Dendritic cell treated with granulocyte-macrophage colony-stimulating factor and Interleukin-4, amounts not matched to agents 40 ng/mL and 50 ng/mL, for 4 days (primary cell): ENCODE measurements at regions of chr15 and their contacts with region 1.

Region 1: DNA sequence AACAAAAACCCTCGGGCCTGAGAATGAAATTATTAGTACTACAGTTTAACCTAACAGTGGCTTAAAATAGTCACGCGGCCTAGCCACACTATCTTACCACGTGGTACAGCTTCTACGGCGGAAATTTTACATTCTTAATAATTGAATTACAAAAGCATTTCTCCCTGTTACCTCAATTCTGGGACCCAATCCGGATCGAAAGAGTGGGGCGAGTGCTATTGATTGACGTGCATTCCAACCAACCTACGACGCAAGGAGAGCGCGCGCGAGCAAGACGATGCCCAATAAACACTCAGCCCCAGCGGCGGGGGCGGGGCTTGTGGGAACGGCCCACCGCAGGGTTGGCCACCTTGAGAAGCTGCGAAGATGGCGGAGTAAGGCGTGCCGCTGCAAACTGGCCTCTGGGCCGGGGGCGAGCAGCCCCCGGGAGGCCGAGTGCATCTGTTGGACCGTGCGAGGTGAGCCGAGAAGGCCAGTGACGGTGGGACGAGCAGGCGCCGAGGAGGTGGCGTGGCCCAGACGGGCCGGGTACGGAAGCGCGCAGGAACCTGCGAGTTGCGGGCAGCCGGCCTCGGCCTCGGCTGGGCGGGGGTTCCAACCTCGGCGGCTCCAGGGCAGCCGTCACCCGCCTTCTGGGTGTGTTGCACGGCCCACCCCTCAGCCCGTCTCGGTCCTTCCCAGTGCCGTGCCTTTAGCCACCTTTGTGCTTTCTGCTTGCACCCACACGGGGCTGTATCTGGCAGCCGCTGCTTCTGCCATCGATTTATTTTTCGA is 48.6 kb downstream of the OIP5 start:
- H3K4me3 Mint-ChIP-seq: peak overlapping the region; percentile 92
- H3K27ac Mint-ChIP-seq: peak overlapping the region; percentile 97
- H3K4me1 Mint-ChIP-seq: peaks cover 28% of the 10 kb centered on the region
- H3K27me3 Mint-ChIP-seq: no peaks in the 10 kb centered on the region

Region 2: DNA sequence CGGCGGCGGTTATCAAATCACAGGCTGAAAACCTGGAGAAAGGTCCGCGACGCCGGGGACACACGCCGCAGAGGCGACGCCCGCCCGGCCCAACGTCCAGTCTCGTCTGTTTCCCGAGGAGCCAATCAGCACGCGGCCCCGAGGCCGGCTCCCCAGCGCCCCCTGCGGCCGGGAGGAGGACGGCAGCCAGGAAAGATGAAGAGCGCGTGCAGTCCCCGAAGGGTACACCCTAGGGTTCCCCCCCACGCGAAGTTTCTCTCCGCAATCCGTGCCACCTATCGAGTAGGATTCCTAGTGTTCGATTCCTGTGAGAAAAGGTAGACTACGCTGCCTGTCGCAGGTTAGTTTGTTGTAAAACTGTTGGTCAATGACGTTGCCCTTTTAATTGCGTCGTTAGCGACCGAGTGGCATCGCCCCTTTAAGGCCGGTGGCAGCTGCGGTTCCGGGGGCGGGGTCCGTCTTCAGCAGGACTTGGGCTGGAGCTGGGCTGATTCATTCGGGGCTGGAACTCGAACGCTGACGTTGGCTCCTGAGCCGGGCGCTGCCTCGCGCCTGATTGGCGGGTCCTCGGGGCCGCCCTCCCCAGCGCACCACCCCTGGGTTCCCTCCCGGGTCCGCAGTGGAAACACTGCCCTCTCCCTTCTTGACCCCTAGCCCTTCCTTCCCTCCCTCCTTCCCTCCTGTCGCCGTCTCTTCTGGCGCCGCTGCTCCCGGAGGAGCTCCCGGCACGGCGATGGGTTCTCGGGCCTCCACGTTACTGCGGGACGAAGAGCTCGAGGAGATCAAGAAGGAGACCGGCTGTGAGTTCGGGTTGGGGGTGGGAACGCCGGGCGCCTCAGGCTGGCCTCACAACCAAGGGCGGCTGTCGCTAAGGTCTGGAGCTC is 52.9 kb before region 1 on chr15 and contains the starts of genes CHP1 and EXD1:
- intact Hi-C with region 1: loop called (anchors 2 kb)
- H3K4me3 Mint-ChIP-seq: peak within 1 kb of the TSS; percentile 91
- H3K27ac Mint-ChIP-seq: peak within 1 kb of the TSS; percentile 96
- H3K4me1 Mint-ChIP-seq: peaks cover 31% of the 10 kb centered on the region
- H3K27me3 Mint-ChIP-seq: peaks cover 3% of the 10 kb centered on the region

Region 3: DNA sequence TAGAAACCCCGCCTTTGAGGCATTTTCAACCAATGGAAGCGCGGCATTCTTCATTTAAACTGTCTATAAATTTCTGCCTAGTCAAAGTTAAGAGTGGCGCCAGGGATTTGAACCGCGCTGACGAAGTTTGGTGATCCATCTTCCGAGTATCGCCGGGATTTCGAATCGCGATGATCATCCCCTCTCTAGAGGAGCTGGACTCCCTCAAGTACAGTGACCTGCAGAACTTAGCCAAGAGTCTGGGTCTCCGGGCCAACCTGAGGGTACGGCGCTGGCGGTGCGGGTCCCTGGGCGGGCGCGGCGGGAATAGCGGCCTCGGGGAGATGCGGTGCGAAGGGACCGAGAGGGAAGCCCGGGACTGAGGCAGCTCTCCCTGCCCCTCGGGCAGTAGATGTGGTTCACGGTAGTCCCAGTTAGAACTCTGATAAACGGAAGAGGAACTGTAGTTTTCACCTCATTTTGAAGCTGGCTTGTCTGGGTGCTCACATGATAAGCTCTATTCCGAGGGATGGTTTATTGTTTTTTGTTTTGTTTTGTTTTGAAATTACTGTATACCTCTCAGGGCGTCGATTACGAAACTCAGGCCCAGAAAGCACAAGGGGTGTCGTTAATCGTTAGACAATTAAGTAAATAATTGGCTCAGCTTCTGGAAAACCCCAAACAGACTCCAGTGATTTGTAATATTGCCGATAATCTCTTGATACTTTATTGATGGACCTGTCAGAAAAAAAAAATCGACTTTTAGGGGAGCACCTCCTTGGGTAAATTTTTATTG is 49.1 kb after region 1 on chr15 and contains the start of gene NUSAP1:
- intact Hi-C with region 1: loop called (anchors 1 kb)
- H3K4me3 Mint-ChIP-seq: peak within 1 kb of the TSS; percentile 99
- H3K27ac Mint-ChIP-seq: peak within 1 kb of the TSS; percentile 93
- H3K4me1 Mint-ChIP-seq: peaks cover 33% of the 10 kb centered on the region
- H3K27me3 Mint-ChIP-seq: no peaks in the 10 kb centered on the region

Region 4: DNA sequence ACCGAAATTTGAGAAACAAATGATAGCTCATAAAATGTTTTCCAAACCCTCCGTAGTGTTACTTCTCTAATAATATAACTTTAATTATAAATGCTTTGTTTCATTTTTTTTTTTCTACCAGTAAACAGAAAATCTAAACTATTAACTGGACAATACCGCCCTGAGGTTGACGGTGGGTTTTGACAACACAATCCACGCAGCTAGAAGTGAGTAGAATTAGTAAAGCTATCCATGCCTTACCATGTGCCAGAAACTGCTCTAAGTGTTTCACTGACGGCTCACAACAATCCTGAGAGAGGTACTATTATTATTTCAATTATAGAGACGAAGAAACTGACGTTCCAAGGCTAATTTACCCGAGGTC is 118.0 kb after region 1 on chr15:
- intact Hi-C with region 1: loop called (anchors 10 kb)
- H3K4me3 Mint-ChIP-seq: peak overlapping the region; percentile 96
- H3K27ac Mint-ChIP-seq: peak overlapping the region; percentile 97
- H3K4me1 Mint-ChIP-seq: peaks cover 35% of the 10 kb centered on the region
- H3K27me3 Mint-ChIP-seq: no peaks in the 10 kb centered on the region

Region 5: DNA sequence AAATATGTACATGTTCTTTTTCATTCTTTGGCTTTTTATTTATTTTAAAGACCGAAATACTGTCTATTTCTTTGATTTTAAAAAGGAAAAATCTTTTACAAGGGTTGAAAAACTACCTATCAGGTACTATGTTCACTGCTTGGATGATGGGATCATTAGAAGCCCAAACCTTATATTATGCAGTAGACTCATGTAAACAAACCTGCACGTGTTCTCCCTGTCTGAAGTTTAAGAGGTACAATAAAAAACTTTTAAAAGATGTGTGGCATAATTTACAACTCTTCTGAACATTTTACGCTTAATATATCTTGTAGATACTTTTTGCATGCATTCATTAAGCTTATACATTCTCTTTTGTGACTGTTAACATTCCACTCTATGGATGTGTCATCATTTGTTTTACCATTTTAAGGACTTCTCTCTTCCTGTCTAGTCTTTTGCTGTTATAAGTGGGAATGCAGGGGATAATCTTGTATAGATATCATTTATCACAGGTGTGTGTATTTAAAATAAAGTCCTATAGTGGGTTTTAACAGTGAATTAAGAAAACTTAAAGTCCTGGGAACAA is 382.6 kb after region 1 on chr15:
- intact Hi-C with region 1: no loop called
- H3K4me3 Mint-ChIP-seq: no peak overlapping the region
- H3K27ac Mint-ChIP-seq: no peak overlapping the region
- H3K4me1 Mint-ChIP-seq: peaks cover 26% of the 10 kb centered on the region
- H3K27me3 Mint-ChIP-seq: no peaks in the 10 kb centered on the region